Activated T-helper 2 cell treated with anti-CD3 and anti-CD28 coated beads, Interferon-gamma antibody, Interleukin-2, Interleukin-4, amounts not matched to agents 10 μg/mL and 5 μg/mL and 100 μg/mL, durations not matched to agents 14 hours and 24 hours and 36 hours (primary cell): ENCODE measurements at regions of chr1 and their contacts with region 1.

Region 1: DNA sequence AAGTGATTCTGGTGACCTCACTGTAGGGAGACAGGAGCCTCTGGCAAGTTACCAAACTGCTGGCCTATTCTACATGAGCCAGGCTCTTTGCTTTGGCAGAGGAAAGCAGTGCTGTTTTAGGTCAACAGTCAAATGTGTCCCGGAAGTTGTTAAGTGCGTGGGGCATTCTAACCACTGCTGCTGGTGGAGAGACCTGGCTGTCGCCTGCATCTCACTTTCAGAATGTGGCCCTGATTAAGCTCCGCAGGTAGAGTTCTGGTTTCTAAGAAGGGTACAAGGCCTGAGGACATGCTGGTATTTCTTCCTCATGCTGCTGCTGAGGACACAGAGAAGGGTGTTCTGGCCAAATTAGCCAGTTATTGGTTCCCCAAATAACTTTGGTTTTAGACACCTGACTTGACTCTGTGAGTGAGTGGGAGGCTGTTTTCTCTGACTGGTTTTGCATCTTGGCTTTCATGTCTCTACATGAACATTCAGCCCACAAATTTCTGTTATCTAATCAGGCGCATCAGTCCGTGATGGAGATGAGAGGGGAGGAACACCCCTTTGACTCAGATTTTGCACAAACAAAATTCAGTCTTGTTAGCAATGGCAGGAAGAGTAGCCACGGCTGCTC is 120.8 kb downstream of the LMO4 start:
- DNase-seq: peak; percentile 11
- H3K4me3 Mint-ChIP-seq: no peak overlapping the region
- H3K27ac Mint-ChIP-seq: peak overlapping the region; percentile 74
- H3K4me1 Mint-ChIP-seq: peaks cover 19% of the 10 kb centered on the region
- H3K27me3 Mint-ChIP-seq: peaks cover 2% of the 10 kb centered on the region

Region 2: GRCh38 chr1:87335175-87335884 is 114.1 kb before region 1 on chr1:
- intact Hi-C with region 1: loop called (anchors 2 kb)
- DNase-seq: peak; percentile 59
- H3K4me3 Mint-ChIP-seq: peak overlapping the region; percentile 84
- H3K27ac Mint-ChIP-seq: peak overlapping the region; percentile 89
- H3K4me1 Mint-ChIP-seq: peaks cover 50% of the 10 kb centered on the region
- H3K27me3 Mint-ChIP-seq: peaks cover 32% of the 10 kb centered on the region

Region 3: GRCh38 chr1:87435484-87435883 is 14.0 kb before region 1 on chr1:
- intact Hi-C with region 1: loop called (anchors 1 kb)
- DNase-seq: no peak
- H3K4me3 Mint-ChIP-seq: no peak overlapping the region
- H3K27ac Mint-ChIP-seq: no peak overlapping the region
- H3K4me1 Mint-ChIP-seq: peaks cover 20% of the 10 kb centered on the region
- H3K27me3 Mint-ChIP-seq: peaks cover 29% of the 10 kb centered on the region